ENCODE measurements at regions of chr3 and their contacts with region 1.

Region 1: DNA sequence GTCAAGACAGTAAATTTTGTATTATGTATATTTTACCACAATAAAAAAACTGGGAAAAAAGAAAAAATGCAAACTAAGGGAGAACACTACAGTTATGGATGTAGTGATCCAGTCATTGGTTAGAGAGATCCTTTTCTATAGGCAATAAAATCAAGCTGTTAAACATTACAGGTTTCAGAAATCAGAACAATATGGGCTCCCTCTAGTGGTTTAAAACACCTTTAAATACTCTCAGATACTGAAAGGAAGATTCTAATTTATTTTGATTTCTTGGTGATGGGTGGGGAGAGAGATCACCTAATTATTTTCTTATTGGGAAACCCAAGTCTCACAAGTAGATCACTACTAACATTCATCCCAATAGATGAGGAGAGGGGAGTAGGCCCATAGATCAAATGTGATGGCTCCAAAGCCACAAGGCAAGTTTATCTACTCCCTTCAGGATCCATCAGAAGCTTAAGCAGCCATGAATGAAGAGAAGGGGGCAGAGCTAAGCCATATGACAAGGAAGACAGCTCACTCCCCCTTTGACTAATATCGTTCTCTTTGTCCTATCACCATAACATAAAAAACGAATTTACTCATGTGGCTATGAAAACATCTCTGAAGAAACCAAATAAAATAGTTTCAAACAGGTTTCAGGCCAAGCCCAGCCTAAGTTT is 118.6 kb downstream of the ANO10 start:
- DNase-seq: peak in 6 of 9 donors; percentile 39 to 68 (median 59)
- ATAC-seq: peak; percentile 68
- H3K4me3 ChIP-seq: no peak overlapping the region
- H3K4me3 Mint-ChIP-seq: no peak overlapping the region
- H3K27ac ChIP-seq: no peak overlapping the region
- H3K27ac Mint-ChIP-seq: peak overlapping the region in 4 of 9 donors; percentile 2 to 49 (median 24)
- H3K4me1 ChIP-seq: peaks cover 17 to 18% of the 10 kb centered on the region in 2 donors
- H3K4me1 Mint-ChIP-seq: peaks cover 18 to 51% (median 48%) of the 10 kb centered on the region in 7 donors
- H3K27me3 ChIP-seq: no peaks in the 10 kb centered on the region
- H3K27me3 Mint-ChIP-seq: peaks cover 0 to 8% (median 0%) of the 10 kb centered on the region in 5 donors

Region 2: DNA sequence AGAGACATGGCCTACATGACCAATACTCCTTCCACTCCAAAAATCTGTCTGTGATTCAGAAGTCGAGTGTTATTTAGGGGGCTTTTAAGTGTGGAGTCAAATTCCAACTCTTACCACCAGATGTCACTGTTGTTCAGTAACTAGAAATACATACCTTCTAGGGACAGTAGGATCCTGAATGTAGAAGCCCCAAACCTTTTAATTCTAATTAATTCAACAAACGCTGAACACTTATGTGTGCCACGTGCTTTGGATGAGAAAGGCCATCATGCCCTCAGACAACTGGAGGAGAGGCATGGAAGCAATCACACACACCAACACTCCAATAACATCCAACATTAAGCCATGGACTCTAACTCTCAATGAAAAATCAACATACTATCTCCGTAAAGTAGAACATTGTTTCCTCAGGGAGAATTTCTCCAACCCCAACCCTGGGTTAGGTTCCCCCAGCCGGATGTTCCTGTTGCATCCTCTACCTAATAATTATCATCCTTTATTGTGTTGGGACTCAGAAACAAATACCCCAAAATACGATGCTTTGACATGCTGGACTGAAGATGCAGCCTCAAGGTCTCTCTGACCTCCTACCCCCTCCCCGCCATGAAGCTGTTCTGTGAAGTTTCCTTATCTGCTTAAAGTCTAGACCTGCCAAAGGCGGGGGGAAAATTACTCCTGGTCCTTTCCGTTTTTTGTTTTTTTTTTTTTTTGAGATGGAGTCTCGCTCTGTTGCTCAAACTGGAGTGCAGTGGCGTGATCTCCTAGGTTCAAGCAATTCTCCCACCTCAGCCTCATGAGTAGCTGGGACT is 722.1 kb before region 1 on chr3:
- CTCF ChIA-PET with region 1: no interaction called
- POLR2A ChIA-PET with region 1: no interaction called
- intact Hi-C with region 1: loop called in 1 of 2 experiments (anchors 10 kb)
- DNase-seq: peak in 7 of 9 donors; percentile 41 to 67 (median 54)
- ATAC-seq: peak; percentile 87
- H3K4me3 ChIP-seq: no peak overlapping the region
- H3K4me3 Mint-ChIP-seq: no peak overlapping the region
- H3K27ac ChIP-seq: no peak overlapping the region
- H3K27ac Mint-ChIP-seq: peak overlapping the region in 2 of 9 donors; percentile 14
- H3K4me1 ChIP-seq: no peaks in the 10 kb centered on the region
- H3K4me1 Mint-ChIP-seq: peaks cover 0 to 5% (median 0%) of the 10 kb centered on the region in 7 donors
- H3K27me3 ChIP-seq: no peaks in the 10 kb centered on the region
- H3K27me3 Mint-ChIP-seq: no peaks in the 10 kb centered on the region

Region 3: GRCh38 chr3:43378066-43378935 is 124.9 kb before region 1 on chr3:
- CTCF ChIA-PET with region 1: interaction called, 11 read pairs
- POLR2A ChIA-PET with region 1: interaction called, 6 read pairs
- intact Hi-C with region 1: loop called in 1 of 2 experiments (anchors 1 kb)
- DNase-seq: peak; percentile 30 to 78 (median 71)
- ATAC-seq: peak; percentile 94
- H3K4me3 ChIP-seq: no peak overlapping the region
- H3K4me3 Mint-ChIP-seq: no peak overlapping the region
- H3K27ac ChIP-seq: no peak overlapping the region
- H3K27ac Mint-ChIP-seq: peak overlapping the region in 8 of 9 donors; percentile 26 to 88 (median 40)
- H3K4me1 ChIP-seq: peaks cover 6 to 10% of the 10 kb centered on the region in 2 donors
- H3K4me1 Mint-ChIP-seq: peaks cover 6 to 29% (median 19%) of the 10 kb centered on the region in 7 donors
- H3K27me3 ChIP-seq: no peaks in the 10 kb centered on the region
- H3K27me3 Mint-ChIP-seq: peaks cover 0 to 12% (median 0%) of the 10 kb centered on the region in 5 donors

Region 4: GRCh38 chr3:43477600-43477999 is 25.6 kb before region 1 on chr3:
- CTCF ChIA-PET with region 1: interaction called, 5 read pairs
- POLR2A ChIA-PET with region 1: interaction called, 5 read pairs
- intact Hi-C with region 1: loop called in 1 of 2 experiments (anchors 1 kb)
- DNase-seq: peak in 8 of 9 donors; percentile 21 to 81 (median 72)
- ATAC-seq: peak; percentile 98
- H3K4me3 ChIP-seq: peak overlapping the region; percentile 7
- H3K4me3 Mint-ChIP-seq: peak overlapping the region; percentile 48 to 78 (median 65)
- H3K27ac ChIP-seq: peak overlapping the region; percentile 71
- H3K27ac Mint-ChIP-seq: peak overlapping the region; percentile 91 to 99 (median 98)
- H3K4me1 ChIP-seq: peaks cover 33 to 40% of the 10 kb centered on the region in 2 donors
- H3K4me1 Mint-ChIP-seq: peaks cover 24 to 66% (median 60%) of the 10 kb centered on the region in 7 donors
- H3K27me3 ChIP-seq: no peaks in the 10 kb centered on the region
- H3K27me3 Mint-ChIP-seq: peaks cover 0 to 2% (median 0%) of the 10 kb centered on the region in 5 donors

Region 5: DNA sequence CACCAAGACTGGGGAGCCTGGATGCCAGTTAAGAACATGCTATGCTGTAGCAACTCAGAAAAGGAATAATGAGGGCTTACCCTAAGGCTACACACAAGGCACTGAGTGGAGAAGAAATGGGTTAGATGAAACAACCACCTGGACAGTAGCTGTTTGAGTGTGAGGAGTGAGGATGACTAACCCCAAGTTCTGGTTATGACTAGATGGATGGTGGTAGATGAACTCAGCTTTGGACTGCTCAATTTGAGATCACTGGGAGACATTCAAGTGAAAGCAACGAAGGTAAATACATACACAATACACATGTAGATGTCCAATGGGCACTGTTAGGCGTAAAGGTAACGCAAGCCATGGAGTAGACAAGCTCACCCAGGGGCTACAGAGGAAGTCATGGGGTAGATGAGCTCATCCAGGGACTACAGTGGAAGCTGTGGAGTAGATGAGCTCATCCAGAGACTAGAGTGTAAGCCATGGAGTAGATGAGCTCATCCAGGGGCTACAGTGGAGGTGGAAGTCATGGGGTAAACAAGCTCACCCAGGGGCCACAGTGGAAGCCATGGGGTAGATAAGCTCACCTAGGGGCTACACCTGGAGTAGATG is 20.4 kb after region 1 on chr3:
- CTCF ChIA-PET with region 1: no interaction called
- POLR2A ChIA-PET with region 1: no interaction called
- intact Hi-C with region 1: no loop called
- DNase-seq: no peak
- ATAC-seq: no peak
- H3K4me3 ChIP-seq: no peak overlapping the region
- H3K4me3 Mint-ChIP-seq: no peak overlapping the region
- H3K27ac ChIP-seq: no peak overlapping the region
- H3K27ac Mint-ChIP-seq: no peak overlapping the region
- H3K4me1 ChIP-seq: no peaks in the 10 kb centered on the region
- H3K4me1 Mint-ChIP-seq: no peaks in the 10 kb centered on the region
- H3K27me3 ChIP-seq: no peaks in the 10 kb centered on the region
- H3K27me3 Mint-ChIP-seq: no peaks in the 10 kb centered on the region